ENCODE measurements at regions of chr2 and their contacts with region 1.

Region 1: GRCh38 chr2:227862227-227862740 is 9.1 kb upstream of the DAW1 start:
- DNase-seq: no peak
- ATAC-seq: peak; percentile 63
- H3K4me3 ChIP-seq: no peak overlapping the region
- H3K27ac ChIP-seq: no peak overlapping the region
- H3K4me1 ChIP-seq: no peaks in the 10 kb centered on the region
- H3K27me3 ChIP-seq: no peaks in the 10 kb centered on the region; a peak in 1 of 4 replicates
- CTCF ChIP-seq: peak; percentile 55 to 70 (median 66)
- EP300 ChIP-seq: no peak
- POLR2A ChIP-seq: no peak
- RAD21 ChIP-seq: peak; percentile 86

Region 2: GRCh38 chr2:226063704-226064440 is 1798.4 kb before region 1 on chr2:
- CTCF ChIA-PET with region 1: no interaction called
- POLR2A ChIA-PET with region 1: no interaction called
- RAD21 ChIA-PET with region 1: no interaction called
- SMC1A ChIA-PET with region 1: no interaction called
- in situ Hi-C with region 1: no loop called
- intact Hi-C with region 1: no loop called
- DNase-seq: no peak
- ATAC-seq: no peak
- H3K4me3 ChIP-seq: no peak overlapping the region
- H3K27ac ChIP-seq: no peak overlapping the region
- H3K4me1 ChIP-seq: no peaks in the 10 kb centered on the region
- H3K27me3 ChIP-seq: no peaks in the 10 kb centered on the region
- CTCF ChIP-seq: no peak
- EP300 ChIP-seq: no peak
- POLR2A ChIP-seq: no peak
- RAD21 ChIP-seq: no peak

Region 3: GRCh38 chr2:227774011-227774624 is 88.2 kb before region 1 on chr2:
- CTCF ChIA-PET with region 1: interaction called, 387 read pairs
- POLR2A ChIA-PET with region 1: interaction called, 9 read pairs
- RAD21 ChIA-PET with region 1: interaction called, 92 read pairs
- SMC1A ChIA-PET with region 1: interaction called, 133 read pairs
- in situ Hi-C with region 1: no loop called
- intact Hi-C with region 1: loop called (anchors 1 kb)
- DNase-seq: no peak
- ATAC-seq: peak; percentile 94
- H3K4me3 ChIP-seq: no peak overlapping the region
- H3K27ac ChIP-seq: no peak overlapping the region
- H3K4me1 ChIP-seq: no peaks in the 10 kb centered on the region
- H3K27me3 ChIP-seq: no peaks in the 10 kb centered on the region
- CTCF ChIP-seq: peak; percentile 22 to 46 (median 43); a peak in 5 of 6 replicates
- EP300 ChIP-seq: no peak
- POLR2A ChIP-seq: no peak
- RAD21 ChIP-seq: peak; percentile 43

Region 4: DNA sequence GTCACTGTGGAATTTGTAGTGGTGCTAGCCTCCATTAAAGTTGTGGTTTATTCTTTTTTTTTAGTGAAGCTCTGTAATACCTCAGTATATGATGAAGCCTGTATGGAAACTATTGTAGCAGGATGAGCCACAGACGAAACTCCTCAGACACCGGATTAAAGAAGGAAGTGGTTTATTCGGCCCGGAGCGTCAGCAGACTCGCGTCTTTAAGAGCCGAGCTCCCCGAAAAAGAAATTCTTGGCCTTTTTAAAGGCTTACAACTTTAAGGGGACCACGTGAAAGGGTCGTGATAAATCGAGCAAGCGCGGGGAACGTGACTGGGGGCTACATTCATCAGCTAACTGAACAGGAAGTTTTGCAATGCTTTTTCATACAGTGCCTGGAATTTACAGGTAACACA is 56.7 kb before region 1 on chr2:
- CTCF ChIA-PET with region 1: interaction called, 65 read pairs
- POLR2A ChIA-PET with region 1: interaction called, 4 read pairs
- RAD21 ChIA-PET with region 1: interaction called, 32 read pairs
- SMC1A ChIA-PET with region 1: interaction called, 33 read pairs
- in situ Hi-C with region 1: no loop called
- intact Hi-C with region 1: loop called (anchors 5 kb)
- DNase-seq: peak; percentile 45
- ATAC-seq: peak; percentile 77
- H3K4me3 ChIP-seq: no peak overlapping the region
- H3K27ac ChIP-seq: peak overlapping the region; percentile 52
- H3K4me1 ChIP-seq: peaks cover 3% of the 10 kb centered on the region; the same call in 1 of the 2 replicates
- H3K27me3 ChIP-seq: no peaks in the 10 kb centered on the region
- CTCF ChIP-seq: no peak
- EP300 ChIP-seq: no peak
- POLR2A ChIP-seq: no peak
- RAD21 ChIP-seq: no peak

Region 5: DNA sequence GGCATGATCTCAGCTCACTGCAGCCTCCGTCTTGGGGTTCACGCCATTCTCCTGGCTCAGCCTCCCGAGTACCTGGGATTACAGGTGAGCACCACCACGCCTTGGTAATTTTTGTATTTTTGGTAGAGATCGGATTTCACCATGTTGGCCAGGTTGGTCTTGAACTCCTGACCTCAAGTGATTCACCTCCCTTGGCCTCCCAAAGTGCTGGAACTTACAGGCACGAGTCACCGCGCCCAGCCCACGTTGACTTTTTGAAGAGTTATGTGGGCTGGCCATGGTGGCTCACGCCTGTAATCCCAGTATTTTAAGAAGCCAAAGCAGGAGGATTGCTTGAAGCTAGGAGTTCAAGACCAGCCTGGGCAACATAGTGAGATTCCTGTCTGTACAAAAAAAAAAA is 27.9 kb before region 1 on chr2:
- CTCF ChIA-PET with region 1: interaction called, 18 read pairs
- POLR2A ChIA-PET with region 1: no interaction called
- RAD21 ChIA-PET with region 1: interaction called, 5 read pairs
- SMC1A ChIA-PET with region 1: interaction called, 8 read pairs
- in situ Hi-C with region 1: no loop called
- intact Hi-C with region 1: no loop called
- DNase-seq: no peak
- ATAC-seq: no peak
- H3K4me3 ChIP-seq: no peak overlapping the region
- H3K27ac ChIP-seq: no peak overlapping the region
- H3K4me1 ChIP-seq: no peaks in the 10 kb centered on the region
- H3K27me3 ChIP-seq: no peaks in the 10 kb centered on the region
- CTCF ChIP-seq: no peak
- EP300 ChIP-seq: no peak
- POLR2A ChIP-seq: no peak
- RAD21 ChIP-seq: no peak

Region 6: GRCh38 chr2:227884511-227884947 is 22.2 kb after region 1 on chr2:
- CTCF ChIA-PET with region 1: interaction called, 14 read pairs
- POLR2A ChIA-PET with region 1: no interaction called
- RAD21 ChIA-PET with region 1: interaction called, 6 read pairs
- SMC1A ChIA-PET with region 1: interaction called, 15 read pairs
- in situ Hi-C with region 1: no loop called
- intact Hi-C with region 1: no loop called
- DNase-seq: no peak
- ATAC-seq: peak; percentile 99
- H3K4me3 ChIP-seq: no peak overlapping the region
- H3K27ac ChIP-seq: no peak overlapping the region
- H3K4me1 ChIP-seq: no peaks in the 10 kb centered on the region
- H3K27me3 ChIP-seq: 0 out of 4 replicates have a peak, but pooled peaks cover 0 to 2% of the 10 kb centered on the region in 2 experiments
- CTCF ChIP-seq: peak; percentile 85 to 96 (median 96)
- EP300 ChIP-seq: no peak
- POLR2A ChIP-seq: no peak
- RAD21 ChIP-seq: peak; percentile 67